B cell (primary cell): ENCODE measurements at regions of chr3 and their contacts with region 1.

Region 1: GRCh38 chr3:177050501-177051237 is 146.6 kb downstream of the TBL1XR1 start:
- DNase-seq: peak; percentile 69
- ATAC-seq: peak; percentile 72
- H3K4me3 ChIP-seq: no peak overlapping the region
- H3K4me3 Mint-ChIP-seq: no peak overlapping the region
- H3K27ac ChIP-seq: no peak overlapping the region
- H3K27ac Mint-ChIP-seq: no peak overlapping the region
- H3K4me1 ChIP-seq: no peaks in the 10 kb centered on the region
- H3K4me1 Mint-ChIP-seq: peaks cover 11% of the 10 kb centered on the region
- H3K27me3 ChIP-seq: no peaks in the 10 kb centered on the region
- H3K27me3 Mint-ChIP-seq: no peaks in the 10 kb centered on the region
- CTCF ChIP-seq: peak; percentile 85

Region 2: GRCh38 chr3:176872771-176873209 is 177.9 kb before region 1 on chr3:
- CTCF ChIA-PET with region 1: interaction called, 15 read pairs
- POLR2A ChIA-PET with region 1: no interaction called
- intact Hi-C with region 1: no loop called
- DNase-seq: peak; percentile 62
- ATAC-seq: peak; percentile 54
- H3K4me3 ChIP-seq: no peak overlapping the region
- H3K4me3 Mint-ChIP-seq: no peak overlapping the region
- H3K27ac ChIP-seq: no peak overlapping the region
- H3K27ac Mint-ChIP-seq: no peak overlapping the region
- H3K4me1 ChIP-seq: peaks cover 0 to 3% of the 10 kb centered on the region in 2 donors
- H3K4me1 Mint-ChIP-seq: peaks cover 1% of the 10 kb centered on the region
- H3K27me3 ChIP-seq: peaks cover 0 to 2% (median 0%) of the 10 kb centered on the region in 4 experiments
- H3K27me3 Mint-ChIP-seq: peaks cover 3% of the 10 kb centered on the region
- CTCF ChIP-seq: peak; percentile 81

Region 3: DNA sequence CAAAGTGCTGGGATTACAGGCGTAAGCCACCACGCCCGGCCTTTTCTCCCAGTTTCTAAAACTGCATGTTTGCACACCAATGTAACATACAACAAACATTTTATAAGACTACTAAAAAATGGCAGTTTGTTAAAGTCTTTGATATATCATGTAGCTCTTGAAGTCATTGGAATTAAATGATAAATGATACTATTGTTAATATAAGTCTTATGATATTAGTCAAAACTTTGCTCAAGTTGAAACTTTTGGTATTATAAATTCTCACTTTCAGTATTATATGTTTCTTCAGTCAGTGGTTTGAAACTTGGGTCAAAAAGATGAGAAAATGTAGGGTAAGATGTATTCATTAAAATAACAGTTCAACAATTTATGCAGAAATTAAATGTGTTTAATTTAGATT is 264.2 kb after region 1 on chr3:
- CTCF ChIA-PET with region 1: interaction called, 7 read pairs
- POLR2A ChIA-PET with region 1: no interaction called
- intact Hi-C with region 1: loop called (anchors 5 kb)
- DNase-seq: no peak
- ATAC-seq: no peak
- H3K4me3 ChIP-seq: no peak overlapping the region
- H3K4me3 Mint-ChIP-seq: no peak overlapping the region
- H3K27ac ChIP-seq: no peak overlapping the region
- H3K27ac Mint-ChIP-seq: no peak overlapping the region
- H3K4me1 ChIP-seq: peaks cover 26 to 29% of the 10 kb centered on the region in 2 donors
- H3K4me1 Mint-ChIP-seq: peaks cover 27% of the 10 kb centered on the region
- H3K27me3 ChIP-seq: no peaks in the 10 kb centered on the region
- H3K27me3 Mint-ChIP-seq: no peaks in the 10 kb centered on the region
- CTCF ChIP-seq: no peak

Region 4: DNA sequence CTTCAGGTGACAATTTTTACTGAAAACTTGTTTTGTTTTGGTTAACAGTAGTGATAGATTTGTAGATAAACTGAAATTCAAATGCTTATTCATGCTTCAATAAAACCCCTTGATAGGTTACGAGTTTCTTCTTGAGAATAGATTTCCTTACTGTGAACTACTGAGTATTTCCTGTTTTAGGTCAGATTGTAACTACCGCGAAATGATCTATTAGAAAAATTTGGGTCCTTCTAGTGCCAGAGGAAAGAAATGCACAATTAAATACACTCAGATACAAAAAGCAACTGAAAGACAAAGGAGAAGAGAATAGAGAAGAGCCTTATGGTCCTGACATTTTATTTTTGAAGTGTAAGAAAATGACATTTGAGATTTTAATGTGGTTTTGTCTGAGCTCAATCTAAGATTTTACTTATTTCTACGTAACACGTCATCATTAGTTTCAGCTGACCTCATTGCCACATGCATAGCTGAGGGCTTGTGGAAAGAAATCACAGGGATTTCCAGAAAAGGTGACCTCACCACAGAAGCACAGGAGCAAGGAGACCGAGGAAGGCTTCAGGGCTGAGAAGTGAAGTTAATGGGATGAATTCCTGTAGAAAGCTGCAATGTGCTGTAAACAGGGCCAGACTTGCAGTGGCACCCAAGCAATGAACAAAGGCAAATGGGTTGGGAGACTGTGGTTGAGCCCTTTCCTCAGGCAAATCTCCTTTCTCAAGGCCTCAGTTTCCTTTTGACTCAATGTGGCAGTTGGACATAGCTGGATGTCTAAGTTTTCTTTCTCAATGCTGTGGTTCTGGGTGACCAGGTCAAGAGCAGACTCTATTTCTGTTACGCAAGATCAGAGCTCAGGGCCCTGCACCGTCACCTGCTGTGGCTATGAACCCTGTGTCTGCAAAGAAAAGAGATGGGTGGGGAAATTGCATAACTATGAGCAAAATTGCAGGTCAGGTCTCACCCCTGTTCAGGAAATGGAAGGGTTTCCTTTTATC is 398.6 kb after region 1 on chr3:
- CTCF ChIA-PET with region 1: no interaction called
- POLR2A ChIA-PET with region 1: no interaction called
- intact Hi-C with region 1: loop called (anchors 10 kb)
- DNase-seq: peak; percentile 17
- ATAC-seq: no peak
- H3K4me3 ChIP-seq: no peak overlapping the region
- H3K4me3 Mint-ChIP-seq: peak overlapping the region; percentile 31
- H3K27ac ChIP-seq: no peak overlapping the region
- H3K27ac Mint-ChIP-seq: peak overlapping the region; percentile 8
- H3K4me1 ChIP-seq: peaks cover 7 to 11% of the 10 kb centered on the region in 2 donors
- H3K4me1 Mint-ChIP-seq: peaks cover 13% of the 10 kb centered on the region
- H3K27me3 ChIP-seq: no peaks in the 10 kb centered on the region
- H3K27me3 Mint-ChIP-seq: no peaks in the 10 kb centered on the region
- CTCF ChIP-seq: no peak

Region 5: GRCh38 chr3:177777699-177778098 is 727.0 kb after region 1 on chr3:
- CTCF ChIA-PET with region 1: interaction called, 46 read pairs
- POLR2A ChIA-PET with region 1: no interaction called
- intact Hi-C with region 1: loop called (anchors 2 kb)
- DNase-seq: peak; percentile 58
- ATAC-seq: peak; percentile 47
- H3K4me3 ChIP-seq: no peak overlapping the region
- H3K4me3 Mint-ChIP-seq: no peak overlapping the region
- H3K27ac ChIP-seq: no peak overlapping the region
- H3K27ac Mint-ChIP-seq: no peak overlapping the region
- H3K4me1 ChIP-seq: peaks cover 14 to 19% of the 10 kb centered on the region in 2 donors
- H3K4me1 Mint-ChIP-seq: peaks cover 18% of the 10 kb centered on the region
- H3K27me3 ChIP-seq: no peaks in the 10 kb centered on the region
- H3K27me3 Mint-ChIP-seq: no peaks in the 10 kb centered on the region
- CTCF ChIP-seq: peak; percentile 56